OCI-LY7 (cell line): ENCODE measurements at regions of chr12 and their contacts with region 1.

Region 1: GRCh38 chr12:57983146-57983857 is 41.9 kb downstream of the ATP23 start:
- DNase-seq: peak; percentile 47
- H3K4me3 ChIP-seq: no peak overlapping the region
- H3K27ac ChIP-seq: no peak overlapping the region
- H3K4me1 ChIP-seq: no peaks in the 10 kb centered on the region
- CTCF ChIP-seq: peak; percentile 89

Region 2: DNA sequence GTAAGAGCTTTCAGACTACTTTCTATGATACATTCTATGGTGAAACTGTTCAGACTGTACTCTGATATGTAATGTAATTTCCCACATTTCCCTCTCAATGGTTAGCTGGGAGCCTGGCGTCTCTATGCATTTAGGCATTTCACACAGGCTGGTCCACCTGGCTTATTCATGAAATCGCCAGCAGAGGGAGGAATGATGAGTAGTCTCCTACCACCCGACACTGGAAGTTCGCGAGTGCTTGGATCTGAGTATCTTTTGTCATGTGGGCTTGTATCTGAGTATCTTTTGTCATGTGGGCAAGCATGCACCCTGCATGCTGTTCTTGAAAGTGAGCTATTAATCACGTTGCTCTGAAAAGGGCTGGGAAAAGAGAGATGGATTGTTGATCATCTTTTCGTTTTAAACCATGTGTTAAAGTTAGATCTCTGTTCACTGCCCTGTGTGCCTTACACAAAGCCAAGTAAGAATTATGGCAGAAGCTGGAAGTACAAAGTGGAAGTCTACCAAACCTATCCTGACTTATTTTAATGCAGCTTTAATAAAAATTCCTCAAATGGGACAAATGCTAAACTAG is 193.1 kb after region 1 on chr12:
- CTCF ChIA-PET with region 1: no interaction called
- POLR2A ChIA-PET with region 1: no interaction called
- intact Hi-C with region 1: no loop called
- DNase-seq: peak; percentile 11
- H3K4me3 ChIP-seq: no peak overlapping the region
- H3K27ac ChIP-seq: no peak overlapping the region
- H3K4me1 ChIP-seq: no peaks in the 10 kb centered on the region
- CTCF ChIP-seq: peak; percentile 60

Region 3: GRCh38 chr12:59164991-59165718 is 1181.9 kb after region 1 on chr12:
- CTCF ChIA-PET with region 1: no interaction called
- POLR2A ChIA-PET with region 1: no interaction called
- intact Hi-C with region 1: loop called (anchors 10 kb)
- DNase-seq: peak; percentile 40
- H3K4me3 ChIP-seq: no peak overlapping the region
- H3K27ac ChIP-seq: no peak overlapping the region
- H3K4me1 ChIP-seq: no peaks in the 10 kb centered on the region
- CTCF ChIP-seq: peak; percentile 90